BJ (cell line): ENCODE measurements at regions of chr16 and their contacts with region 1.

Region 1: DNA sequence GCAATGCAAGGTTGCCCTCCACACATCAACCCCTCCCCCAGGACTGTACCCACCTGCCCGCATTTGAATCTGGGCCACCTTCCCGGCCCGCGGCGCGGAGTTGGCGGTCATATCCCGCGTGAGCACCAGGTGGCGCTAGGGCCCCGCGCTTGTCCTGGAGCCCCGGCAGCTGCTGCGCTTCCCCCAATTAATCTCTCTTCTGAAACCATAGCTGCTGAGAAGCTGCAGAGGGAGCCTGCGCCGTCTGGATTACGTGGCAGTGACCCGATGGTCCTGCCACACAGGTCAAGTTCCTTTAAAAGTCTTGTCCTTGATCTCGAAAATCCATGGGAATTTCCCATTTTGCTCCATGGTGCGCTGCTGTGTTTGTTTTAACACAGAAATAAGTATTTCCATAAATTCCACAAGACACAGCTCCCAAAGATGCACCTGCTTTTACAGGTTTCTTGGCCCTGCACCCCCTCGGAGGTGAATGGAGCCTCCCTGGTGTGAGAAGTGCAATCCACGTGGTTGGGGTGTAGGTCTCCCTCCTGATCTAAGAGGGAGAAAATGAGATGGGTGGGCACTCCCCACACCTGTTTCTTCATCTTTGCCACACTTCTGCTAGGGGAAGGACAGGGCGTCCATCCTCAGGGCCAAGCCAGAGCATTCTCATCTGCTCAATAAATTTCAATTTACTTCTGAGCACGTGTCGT is 22.1 kb downstream of the COX4I1 start:
- DNase-seq: no peak
- H3K4me3 ChIP-seq: no peak overlapping the region
- H3K27me3 ChIP-seq: peaks cover 15% of the 10 kb centered on the region
- CTCF ChIP-seq: peak; percentile 90

Region 2: GRCh38 chr16:85781695-85782370 is 39.8 kb before region 1 on chr16:
- CTCF ChIA-PET with region 1: no interaction called
- POLR2A ChIA-PET with region 1: no interaction called
- DNase-seq: no peak
- H3K4me3 ChIP-seq: no peak overlapping the region
- H3K27me3 ChIP-seq: no peaks in the 10 kb centered on the region
- CTCF ChIP-seq: no peak

Region 3: GRCh38 chr16:85798901-85799496 is 22.6 kb before region 1 on chr16:
- CTCF ChIA-PET with region 1: interaction called, 17 read pairs
- POLR2A ChIA-PET with region 1: no interaction called
- DNase-seq: no peak
- H3K4me3 ChIP-seq: peak overlapping the region; percentile 94
- H3K27me3 ChIP-seq: no peaks in the 10 kb centered on the region
- CTCF ChIP-seq: 0 out of 2 replicates have a peak, but pooled peaks have one; percentile 17

Region 4: DNA sequence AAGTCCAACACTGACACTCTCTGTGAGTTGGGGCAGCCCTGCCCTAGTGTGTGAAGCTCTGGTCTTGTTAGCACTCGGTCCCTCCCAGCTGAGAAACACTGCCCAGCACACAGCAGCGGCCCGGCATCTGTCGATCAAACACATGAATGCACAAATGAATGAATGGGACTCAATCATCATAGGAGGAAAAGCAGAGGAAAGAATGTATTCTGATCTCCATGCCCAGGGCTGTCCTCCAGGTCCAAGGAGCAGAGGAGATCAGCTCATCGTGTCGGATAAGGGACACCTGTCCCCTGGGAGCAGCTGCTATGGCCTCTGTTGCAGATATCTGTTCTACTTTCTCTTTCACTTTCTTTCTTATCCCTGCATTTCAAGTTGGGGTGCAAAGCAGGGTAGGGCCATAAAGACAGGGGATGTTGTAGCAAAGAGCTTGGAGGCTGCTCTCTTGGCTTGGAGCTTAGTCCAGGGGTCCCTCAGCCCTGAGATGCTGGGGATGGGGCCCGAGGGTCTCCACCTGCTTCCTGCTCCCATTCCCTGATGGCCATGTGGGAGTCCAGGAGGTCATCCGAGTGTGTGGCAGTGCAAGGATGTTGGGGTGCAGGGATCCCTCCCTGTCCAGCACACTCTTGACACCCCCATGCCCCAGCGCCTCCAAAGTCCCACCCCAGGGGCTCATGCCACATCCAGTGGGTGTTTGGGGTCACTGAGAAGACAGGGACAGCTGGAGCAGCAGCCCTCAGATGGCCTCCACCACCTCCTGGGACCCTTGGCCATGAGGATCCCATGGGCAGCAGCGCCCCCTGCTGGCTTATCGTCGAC is 165.6 kb after region 1 on chr16:
- CTCF ChIA-PET with region 1: interaction called, 140 read pairs
- POLR2A ChIA-PET with region 1: no interaction called
- DNase-seq: no peak
- H3K4me3 ChIP-seq: no peak overlapping the region
- H3K27me3 ChIP-seq: peaks cover 36% of the 10 kb centered on the region
- CTCF ChIP-seq: peak; percentile 35; the same call in 1 of the 2 replicates

Region 5: GRCh38 chr16:86002178-86002900 is 180.8 kb after region 1 on chr16:
- CTCF ChIA-PET with region 1: interaction called, 12 read pairs
- POLR2A ChIA-PET with region 1: no interaction called
- DNase-seq: no peak
- H3K4me3 ChIP-seq: no peak overlapping the region
- H3K27me3 ChIP-seq: peaks cover 9% of the 10 kb centered on the region
- CTCF ChIP-seq: no peak

Region 6: GRCh38 chr16:86016201-86016871 is 194.7 kb after region 1 on chr16:
- CTCF ChIA-PET with region 1: interaction called, 158 read pairs
- POLR2A ChIA-PET with region 1: no interaction called
- DNase-seq: no peak
- H3K4me3 ChIP-seq: no peak overlapping the region
- H3K27me3 ChIP-seq: peaks cover 2% of the 10 kb centered on the region
- CTCF ChIP-seq: peak; percentile 80